Activated CD4-positive, alpha-beta memory T cell treated with anti-CD3 and anti-CD28 coated beads, Interleukin-2, amount 10 ng/mL, durations not matched to agents 7 days and 5 days (primary cell): ENCODE measurements at regions of chr12 and their contacts with region 1.

Region 1: GRCh38 chr12:47216150-47216677 is 136.5 kb upstream of the AMIGO2 start:
- DNase-seq: peak; percentile 87
- H3K4me3 Mint-ChIP-seq: peak overlapping the region; percentile 85
- H3K27ac Mint-ChIP-seq: peak overlapping the region; percentile 97
- H3K4me1 Mint-ChIP-seq: peaks cover 37% of the 10 kb centered on the region
- H3K27me3 Mint-ChIP-seq: no peaks in the 10 kb centered on the region

Region 2: GRCh38 chr12:46217541-46218321 is 998.5 kb before region 1 on chr12:
- CTCF ChIA-PET with region 1: no interaction called
- POLR2A ChIA-PET with region 1: interaction called, 13 read pairs
- DNase-seq: peak; percentile 81
- H3K4me3 Mint-ChIP-seq: peak overlapping the region; percentile 73
- H3K27ac Mint-ChIP-seq: peak overlapping the region; percentile 95
- H3K4me1 Mint-ChIP-seq: peaks cover 94% of the 10 kb centered on the region
- H3K27me3 Mint-ChIP-seq: no peaks in the 10 kb centered on the region

Region 3: DNA sequence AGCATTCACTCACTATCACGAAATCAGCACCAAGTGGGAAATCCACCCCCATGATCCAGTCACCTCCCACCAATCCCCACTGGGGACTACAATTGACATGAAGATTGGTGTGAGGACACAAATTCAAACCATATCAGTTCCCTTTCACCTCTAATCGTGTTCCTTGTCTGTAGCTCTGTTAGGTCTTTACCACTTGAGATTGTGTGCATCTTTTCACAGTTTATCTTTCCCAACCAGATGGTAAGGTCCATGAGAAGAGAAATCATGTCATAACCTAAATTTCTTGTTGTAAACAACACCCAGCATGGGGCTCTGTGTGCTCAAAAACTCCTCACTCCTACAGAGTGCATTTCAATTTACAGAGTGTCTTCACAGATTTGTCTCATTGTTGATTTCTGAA is 163.9 kb before region 1 on chr12:
- CTCF ChIA-PET with region 1: no interaction called
- POLR2A ChIA-PET with region 1: no interaction called
- DNase-seq: no peak
- H3K4me3 Mint-ChIP-seq: no peak overlapping the region
- H3K27ac Mint-ChIP-seq: no peak overlapping the region
- H3K4me1 Mint-ChIP-seq: no peaks in the 10 kb centered on the region
- H3K27me3 Mint-ChIP-seq: no peaks in the 10 kb centered on the region

Region 4: GRCh38 chr12:47079468-47079980 is 136.7 kb before region 1 on chr12 and contains the starts of genes AMIGO2 and PCED1B:
- CTCF ChIA-PET with region 1: interaction called, 11 read pairs
- POLR2A ChIA-PET with region 1: interaction called, 77 read pairs
- DNase-seq: peak; percentile 68
- H3K4me3 Mint-ChIP-seq: peak within 1 kb of the TSS; percentile 92
- H3K27ac Mint-ChIP-seq: peak within 1 kb of the TSS; percentile 79
- H3K4me1 Mint-ChIP-seq: peaks cover 67% of the 10 kb centered on the region
- H3K27me3 Mint-ChIP-seq: no peaks in the 10 kb centered on the region
- total RNA-seq, gene AMIGO2: 6.6 to 7.1 TPM
- total RNA-seq, gene PCED1B: 57.1 to 62.2 TPM

Region 5: DNA sequence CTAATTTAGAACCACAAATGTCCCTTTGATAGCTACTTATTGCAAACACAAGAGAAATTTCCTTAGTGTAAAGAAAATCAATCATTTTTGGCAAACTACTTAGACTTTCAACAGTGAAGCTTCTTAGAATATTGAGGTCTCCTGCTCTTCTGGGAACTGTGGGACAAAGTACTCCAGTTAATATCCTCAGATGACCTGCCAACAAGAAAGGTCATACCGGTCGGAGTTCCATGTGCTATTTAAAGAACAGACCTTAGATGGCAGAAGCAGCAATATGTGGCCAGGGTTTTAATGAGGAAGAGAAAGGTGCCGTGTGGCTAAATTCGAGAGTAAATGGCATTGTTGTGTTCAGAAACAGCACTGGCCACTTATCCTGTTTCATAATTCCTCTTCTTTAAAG is 21.7 kb before region 1 on chr12:
- CTCF ChIA-PET with region 1: interaction called, 10 read pairs
- POLR2A ChIA-PET with region 1: interaction called, 91 read pairs
- DNase-seq: no peak
- H3K4me3 Mint-ChIP-seq: no peak overlapping the region
- H3K27ac Mint-ChIP-seq: peak overlapping the region; percentile 84
- H3K4me1 Mint-ChIP-seq: peaks cover 56% of the 10 kb centered on the region
- H3K27me3 Mint-ChIP-seq: no peaks in the 10 kb centered on the region

Region 6: GRCh38 chr12:47276621-47277309 is 60.6 kb after region 1 on chr12:
- CTCF ChIA-PET with region 1: interaction called, 4 read pairs
- POLR2A ChIA-PET with region 1: interaction called, 35 read pairs
- DNase-seq: peak; percentile 73
- H3K4me3 Mint-ChIP-seq: peak overlapping the region; percentile 48
- H3K27ac Mint-ChIP-seq: peak overlapping the region; percentile 87
- H3K4me1 Mint-ChIP-seq: peaks cover 55% of the 10 kb centered on the region
- H3K27me3 Mint-ChIP-seq: no peaks in the 10 kb centered on the region

Region 7: GRCh38 chr12:47361389-47362021 is 145.3 kb after region 1 on chr12:
- CTCF ChIA-PET with region 1: interaction called, 3 read pairs
- POLR2A ChIA-PET with region 1: interaction called, 97 read pairs
- DNase-seq: peak; percentile 68
- H3K4me3 Mint-ChIP-seq: peak overlapping the region; percentile 76
- H3K27ac Mint-ChIP-seq: peak overlapping the region; percentile 100
- H3K4me1 Mint-ChIP-seq: peaks cover 60% of the 10 kb centered on the region
- H3K27me3 Mint-ChIP-seq: no peaks in the 10 kb centered on the region